GM12878 (cell line): ENCODE measurements at regions of chr5 and their contacts with region 1.

Region 1: DNA sequence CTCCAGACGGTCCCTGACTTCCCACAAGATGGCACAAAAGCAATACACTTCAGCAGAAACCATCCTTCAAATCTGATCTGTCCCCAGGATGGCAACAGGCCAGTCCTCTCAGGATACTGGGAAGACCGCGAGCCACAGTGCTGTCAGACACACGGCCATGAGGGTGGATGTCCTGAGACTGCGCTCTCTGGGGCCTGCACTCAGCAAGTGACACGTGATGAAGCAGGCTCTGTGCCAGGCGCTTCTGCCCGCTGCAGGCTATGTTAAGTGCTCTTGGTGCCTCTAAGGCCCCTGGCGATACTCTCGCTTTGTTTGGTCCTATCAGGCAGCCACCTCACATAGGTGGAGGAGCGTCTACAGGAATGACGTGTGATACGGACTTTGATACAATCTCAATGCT is 7.1 kb downstream of the BRD9 start:
- DNase-seq: no peak
- ATAC-seq: no peak
- H3K4me3 ChIP-seq: no peak overlapping the region
- H3K27ac ChIP-seq: no peak overlapping the region
- H3K4me1 ChIP-seq: no peaks in the 10 kb centered on the region
- H3K27me3 ChIP-seq: no peaks in the 10 kb centered on the region
- CTCF ChIP-seq: no peak
- EP300 ChIP-seq: no peak
- POLR2A ChIP-seq: no peak
- RAD21 ChIP-seq: no peak

Region 2: DNA sequence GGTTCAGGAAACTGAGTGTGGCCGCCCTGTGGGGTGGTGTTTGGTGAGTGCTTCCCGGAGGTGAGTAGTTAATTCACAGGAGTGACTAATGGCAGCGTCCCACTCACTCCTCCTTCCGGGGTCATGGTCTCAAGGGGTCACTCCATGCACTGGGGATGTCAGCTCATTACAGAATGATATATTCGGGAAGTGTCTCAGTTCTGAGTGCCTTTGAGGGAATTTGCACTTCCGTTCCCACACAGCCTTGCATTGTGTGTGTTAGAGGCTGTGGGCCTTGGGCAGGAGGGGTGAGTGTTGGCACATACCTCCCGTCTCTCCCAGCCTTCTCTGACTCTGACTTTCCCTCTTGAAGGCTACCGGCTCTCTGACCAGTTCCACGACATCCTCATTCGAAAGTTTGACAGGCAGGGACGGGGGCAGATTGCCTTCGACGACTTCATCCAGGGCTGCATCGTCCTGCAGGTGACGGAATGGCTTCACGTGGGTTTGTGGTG is 574.5 kb before region 1 on chr5:
- CTCF ChIA-PET with region 1: no interaction called
- POLR2A ChIA-PET with region 1: no interaction called
- RAD21 ChIA-PET with region 1: no interaction called
- SMC1A ChIA-PET with region 1: no interaction called
- in situ Hi-C with region 1: loop called (anchors 5 kb)
- intact Hi-C with region 1: loop called (anchors 5 kb)
- DNase-seq: no peak
- ATAC-seq: no peak
- H3K4me3 ChIP-seq: no peak overlapping the region
- H3K27ac ChIP-seq: no peak overlapping the region
- H3K4me1 ChIP-seq: no peaks in the 10 kb centered on the region
- H3K27me3 ChIP-seq: no peaks in the 10 kb centered on the region
- CTCF ChIP-seq: no peak
- EP300 ChIP-seq: no peak
- POLR2A ChIP-seq: no peak
- RAD21 ChIP-seq: no peak